ENCODE measurements at regions of chr6 and their contacts with region 1.

Region 1: DNA sequence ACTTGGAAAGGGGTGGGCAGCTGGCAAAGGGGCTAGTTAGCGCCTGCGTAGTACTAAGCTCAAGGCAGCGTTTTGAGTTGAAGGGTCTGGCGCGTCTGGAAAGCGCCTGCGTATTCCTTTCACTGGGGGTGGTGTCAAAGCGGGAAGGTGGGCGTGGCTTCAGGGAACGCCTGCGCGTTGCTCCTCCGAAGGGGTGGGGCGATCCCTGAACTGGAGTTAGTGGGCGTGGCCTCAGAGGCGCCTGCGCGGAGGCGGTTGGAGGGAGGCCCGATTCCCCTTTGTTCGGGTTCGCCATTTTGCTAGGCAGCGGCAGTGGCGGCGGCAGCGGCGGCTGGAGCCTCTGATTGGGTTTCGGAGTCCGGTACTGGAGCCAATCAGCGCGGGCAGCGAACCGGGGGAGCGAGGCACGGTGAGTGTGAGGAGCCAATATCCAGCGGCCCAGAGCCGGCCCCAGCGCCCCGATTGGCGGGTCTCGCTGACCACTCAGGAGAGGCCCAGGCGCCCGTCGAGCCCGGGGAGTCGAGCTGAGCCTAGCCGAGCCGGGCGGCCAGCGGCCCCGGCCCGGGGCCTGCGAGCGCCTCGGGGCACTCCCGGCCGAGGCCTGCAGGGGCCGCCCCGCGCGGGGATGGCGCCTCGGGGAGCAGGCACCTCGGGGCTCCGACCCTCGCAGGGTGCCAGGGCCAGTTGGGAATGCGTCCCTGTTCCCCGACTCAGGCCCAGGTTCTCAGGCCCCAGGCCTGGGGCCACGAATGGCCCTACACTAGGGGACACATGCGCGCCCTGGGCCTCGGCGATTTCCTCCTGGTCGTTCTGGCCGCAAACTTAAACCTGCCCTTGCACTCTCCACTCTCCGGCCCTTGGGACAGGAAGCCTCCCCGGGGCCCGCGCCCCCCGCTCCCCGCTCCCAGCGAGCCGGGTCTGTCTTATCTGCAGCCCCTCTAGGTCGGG is at the start of gene NFYA:
- DNase-seq: peak; percentile 100
- ATAC-seq: peak; percentile 95
- H3K4me3 ChIP-seq: peak within 1 kb of the TSS; percentile 68 to 76
- H3K27ac ChIP-seq: peak within 1 kb of the TSS; percentile 88 to 97
- H3K4me1 ChIP-seq: no peaks in the 10 kb centered on the region
- H3K27me3 ChIP-seq: no peaks in the 10 kb centered on the region
- total RNA-seq, gene NFYA: 13.3 to 18.6 TPM

Region 2: DNA sequence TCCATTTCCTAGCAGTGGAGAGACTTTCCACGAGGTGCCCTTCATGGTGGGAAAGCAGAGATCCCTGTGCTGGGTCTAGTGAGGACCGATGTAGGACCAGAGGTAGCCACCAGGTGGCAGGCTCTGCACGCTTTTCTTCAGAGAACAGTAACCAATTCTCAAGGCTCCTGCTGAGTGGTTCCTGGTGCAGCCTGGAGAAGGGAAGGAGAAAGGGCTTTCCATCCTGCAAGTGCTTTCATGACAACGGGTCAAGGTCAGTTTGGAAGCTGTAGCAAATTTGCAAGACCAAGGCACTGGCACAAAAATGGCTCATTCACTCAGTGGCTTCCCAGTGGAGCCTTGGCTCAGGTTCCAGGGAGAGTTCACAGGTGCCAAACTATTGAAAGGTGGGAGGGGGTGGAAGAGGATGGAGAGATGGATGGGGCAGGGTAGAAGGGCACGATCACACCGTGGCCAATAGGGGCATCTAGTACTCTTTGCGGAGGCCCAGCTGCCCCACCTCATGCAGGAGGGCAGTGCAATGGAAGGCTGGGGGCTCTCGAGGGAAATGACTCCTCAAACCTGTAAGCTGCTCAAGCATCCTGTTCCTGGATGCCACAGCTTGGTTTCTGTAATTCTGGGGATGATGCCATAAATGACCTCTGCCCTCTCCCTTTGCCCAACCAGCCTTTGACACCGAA is 1724.9 kb before region 1 on chr6:
- intact Hi-C with region 1: loop called in 1 of 2 experiments (anchors 10 kb)
- DNase-seq: peak; percentile 79 to 92
- ATAC-seq: peak; percentile 75
- H3K4me3 ChIP-seq: no peak overlapping the region
- H3K27ac ChIP-seq: no peak overlapping the region
- H3K4me1 ChIP-seq: no peaks in the 10 kb centered on the region
- H3K27me3 ChIP-seq: no peaks in the 10 kb centered on the region

Region 3: DNA sequence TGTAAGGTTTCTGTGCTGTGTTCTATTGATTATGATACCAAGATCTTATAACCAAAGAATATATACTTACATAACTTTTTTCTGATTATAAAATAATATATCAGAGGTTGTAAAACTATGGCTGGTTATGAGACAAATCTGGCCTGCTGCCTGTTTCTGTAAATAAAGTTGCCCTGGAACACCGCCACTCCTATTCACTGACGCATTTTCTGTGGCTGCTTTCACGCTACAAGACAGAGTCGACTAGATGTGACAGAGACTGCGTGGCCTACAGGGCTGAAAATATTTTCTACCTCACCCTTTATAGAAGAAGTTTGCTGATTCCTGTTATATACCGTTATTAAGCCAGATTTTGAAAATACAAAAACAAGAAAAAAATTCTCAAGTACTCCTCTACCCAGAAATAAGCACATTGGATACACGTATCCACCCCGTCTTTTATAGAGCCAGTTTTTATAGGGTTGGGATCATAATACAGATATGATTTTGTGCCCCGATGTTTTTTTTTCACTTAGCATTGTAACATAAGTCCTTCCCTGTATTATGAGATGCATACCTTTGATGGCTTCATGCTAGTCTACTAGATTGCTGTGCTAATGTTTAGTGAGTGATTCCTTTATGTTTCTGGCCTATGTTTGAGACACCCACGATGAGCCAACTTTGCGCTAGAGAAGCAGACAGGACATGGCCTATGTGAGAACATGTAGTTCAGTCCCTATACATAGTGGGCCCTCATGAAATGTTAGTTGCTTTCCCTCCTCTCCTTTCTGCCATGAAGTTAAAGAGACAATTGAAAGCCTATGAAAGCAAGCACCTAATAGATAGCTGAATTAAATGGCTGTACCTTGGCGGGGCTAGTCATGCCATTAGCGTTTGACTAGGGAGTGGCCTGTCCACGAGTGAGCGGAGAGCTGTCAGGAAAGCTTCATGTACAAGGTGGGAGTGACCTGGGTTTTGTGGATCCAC is 1652.4 kb before region 1 on chr6:
- intact Hi-C with region 1: loop called in 1 of 2 experiments (anchors 5 kb)
- DNase-seq: no peak
- ATAC-seq: no peak
- H3K4me3 ChIP-seq: no peak overlapping the region
- H3K27ac ChIP-seq: peak overlapping the region in 1 of 2 donors; percentile 52
- H3K4me1 ChIP-seq: peaks cover 3 to 4% of the 10 kb centered on the region in 2 donors
- H3K27me3 ChIP-seq: no peaks in the 10 kb centered on the region

Region 4: GRCh38 chr6:40922281-40922680 is 150.7 kb before region 1 on chr6:
- intact Hi-C with region 1: no loop called
- DNase-seq: no peak
- ATAC-seq: no peak
- H3K4me3 ChIP-seq: no peak overlapping the region
- H3K27ac ChIP-seq: no peak overlapping the region
- H3K4me1 ChIP-seq: no peaks in the 10 kb centered on the region
- H3K27me3 ChIP-seq: no peaks in the 10 kb centered on the region

Region 5: DNA sequence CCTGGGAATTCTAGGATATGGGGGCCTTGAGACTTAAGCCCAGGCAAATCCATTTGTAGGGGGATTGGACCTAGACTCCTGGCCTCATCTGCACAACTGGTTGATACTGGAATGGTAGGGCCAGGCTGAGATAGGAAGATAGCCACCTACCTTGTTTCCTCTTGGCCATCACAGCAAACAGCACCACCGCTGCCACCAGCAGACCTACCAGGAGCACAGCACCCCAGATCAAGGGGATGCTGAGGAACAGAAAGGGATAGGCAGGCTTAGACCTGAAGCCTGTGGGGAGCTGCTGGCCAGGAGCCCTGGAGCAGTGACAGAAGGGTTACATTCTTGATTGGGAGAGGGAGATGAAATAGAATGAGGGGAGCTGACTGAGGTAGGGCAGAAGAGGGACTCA is 77.7 kb after region 1 on chr6:
- intact Hi-C with region 1: no loop called
- DNase-seq: no peak
- ATAC-seq: no peak
- H3K4me3 ChIP-seq: no peak overlapping the region
- H3K27ac ChIP-seq: no peak overlapping the region
- H3K4me1 ChIP-seq: no peaks in the 10 kb centered on the region
- H3K27me3 ChIP-seq: no peaks in the 10 kb centered on the region